ENCODE measurements at regions of chr12 and their contacts with region 1.

Region 1: DNA sequence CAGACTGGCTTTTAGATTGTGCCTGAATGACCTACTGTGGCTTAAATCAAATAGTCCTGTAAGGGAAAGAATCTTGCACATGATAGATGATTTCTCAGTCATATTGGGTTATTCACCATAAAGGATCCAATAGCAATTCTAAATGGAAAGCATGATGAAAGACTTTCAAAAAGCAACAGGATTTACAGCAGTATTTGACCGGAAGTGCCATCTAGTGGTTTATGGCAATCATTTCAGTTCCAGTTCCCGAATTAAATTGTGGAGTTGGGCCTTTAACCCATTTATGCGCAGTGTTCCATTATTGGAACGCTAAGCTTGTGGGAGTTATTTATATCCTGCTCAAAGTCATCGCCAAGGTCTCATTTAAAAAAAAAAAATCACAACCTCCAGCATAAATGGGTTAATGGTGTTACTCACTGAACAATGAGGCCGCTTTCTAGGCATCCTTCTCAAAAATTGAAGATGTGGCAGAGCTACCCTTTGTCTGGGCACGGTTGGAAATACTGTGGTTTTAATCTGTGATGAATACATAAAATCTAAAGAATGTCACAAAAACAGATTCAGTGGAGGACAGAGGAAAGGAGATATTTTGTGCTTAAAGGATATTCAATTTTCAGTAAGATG is 60.8 kb upstream of the REP15 start:
- DNase-seq: peak in 1 of 2 donors; percentile 76
- H3K4me3 ChIP-seq: no peak overlapping the region
- H3K27ac ChIP-seq: no peak overlapping the region
- H3K4me1 ChIP-seq: peaks cover 0 to 18% (median 7%) of the 10 kb centered on the region in 4 donors
- H3K27me3 ChIP-seq: no peaks in the 10 kb centered on the region
- CTCF ChIP-seq: peak in 5 of 7 experiments; percentile 44 to 77 (median 61)
- EP300 ChIP-seq: no peak
- POLR2A ChIP-seq: no peak

Region 2: GRCh38 chr12:27243804-27244683 is 391.4 kb before region 1 on chr12 and contains the start of gene STK38L:
- intact Hi-C with region 1: no loop called
- DNase-seq: peak; percentile 97 to 99
- H3K4me3 ChIP-seq: peak within 1 kb of the TSS; percentile 74 to 89 (median 82)
- H3K27ac ChIP-seq: peak within 1 kb of the TSS; percentile 81 to 94 (median 90)
- H3K4me1 ChIP-seq: peaks cover 11 to 41% (median 19%) of the 10 kb centered on the region in 4 donors
- H3K27me3 ChIP-seq: no peaks in the 10 kb centered on the region
- CTCF ChIP-seq: peak in 1 of 7 experiments; percentile 33
- EP300 ChIP-seq: no peak
- POLR2A ChIP-seq: peak in 1 of 4 donors; percentile 87
- total RNA-seq, gene STK38L: 21.7 to 118 (median 47.8) TPM

Region 3: DNA sequence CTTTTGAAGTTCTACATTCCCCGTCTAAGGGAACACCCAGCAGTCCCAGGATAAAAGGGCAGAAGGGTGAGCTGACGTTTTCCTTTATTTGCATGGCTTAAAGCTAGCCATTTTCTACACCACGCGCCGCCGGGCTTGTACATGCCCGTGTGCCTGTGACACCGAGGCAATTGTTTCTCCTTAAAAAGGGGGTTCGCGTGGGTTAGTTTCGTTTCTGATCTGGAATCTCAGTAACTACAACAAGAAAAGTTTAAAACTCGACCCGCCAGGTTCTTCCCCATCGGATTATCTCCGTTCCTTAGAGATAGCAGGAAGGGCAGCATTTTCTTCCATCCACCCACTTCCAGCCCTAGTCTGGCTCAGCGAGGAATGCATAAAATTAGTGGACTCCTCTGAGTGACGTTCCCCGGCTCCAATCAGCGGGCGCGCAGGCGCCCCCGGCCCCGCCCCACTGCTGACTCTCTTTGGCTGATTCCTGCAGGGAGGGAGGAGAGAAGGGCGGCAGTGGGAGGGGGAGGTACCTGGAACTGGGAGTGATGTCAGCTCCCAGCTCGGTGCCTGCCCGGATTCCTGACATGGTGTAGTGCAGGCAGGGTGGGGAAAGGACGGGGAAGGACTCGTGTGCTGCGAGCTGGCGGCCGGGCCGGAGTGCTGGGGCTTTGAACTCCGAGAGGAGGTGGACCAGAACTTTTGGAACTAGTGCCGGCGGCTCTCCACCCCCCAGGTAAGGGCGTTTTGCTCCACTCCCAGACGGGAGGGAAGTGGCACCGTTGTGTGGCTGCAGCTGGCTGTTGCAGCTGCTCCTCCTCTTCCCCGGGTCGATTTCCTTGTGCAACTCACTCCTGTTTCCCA is 111.6 kb before region 1 on chr12 and contains the start of gene PPFIBP1:
- intact Hi-C with region 1: loop called (anchors 10 kb)
- DNase-seq: peak; percentile 99
- H3K4me3 ChIP-seq: peak within 1 kb of the TSS; percentile 59 to 89 (median 68)
- H3K27ac ChIP-seq: peak within 1 kb of the TSS; percentile 90 to 95 (median 92)
- H3K4me1 ChIP-seq: peaks cover 0 to 38% (median 14%) of the 10 kb centered on the region in 4 donors
- H3K27me3 ChIP-seq: no peaks in the 10 kb centered on the region
- CTCF ChIP-seq: peak in 4 of 7 experiments; percentile 10 to 38 (median 20)
- EP300 ChIP-seq: no peak
- POLR2A ChIP-seq: peak in 2 of 4 donors; percentile 69 to 79
- total RNA-seq, gene PPFIBP1: 36.8 to 254 (median 108) TPM